Left ventricle myocardium inferior (tissue), 1 donor: ENCODE measurements at regions of chr9 and their contacts with region 1.

Region 1: DNA sequence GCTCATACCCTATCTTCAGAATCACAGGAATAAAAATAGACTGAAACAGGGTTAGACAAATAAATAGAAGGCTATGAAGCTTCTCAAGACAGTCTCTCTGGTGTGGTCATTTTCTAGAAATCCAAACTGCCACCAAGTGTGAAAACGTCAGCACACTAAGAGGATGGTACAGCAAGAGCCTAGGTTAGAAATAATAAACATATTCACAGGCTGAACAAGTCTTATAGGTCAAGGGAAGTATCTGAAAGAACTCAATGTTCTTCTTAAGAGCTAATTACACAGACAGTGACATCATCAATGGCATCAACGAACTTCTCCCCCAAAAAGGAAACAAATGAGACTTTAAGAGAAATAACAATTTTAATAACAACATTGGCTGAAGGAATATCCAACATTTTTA is 22.7 kb upstream of the PLPP6 start:
- DNase-seq: no peak
- H3K4me3 ChIP-seq: no peak overlapping the region
- H3K27ac ChIP-seq: no peak overlapping the region
- H3K4me1 ChIP-seq: no peaks in the 10 kb centered on the region
- H3K27me3 ChIP-seq: no peaks in the 10 kb centered on the region
- CTCF ChIP-seq: no peak

Region 2: GRCh38 chr9:4038182-4038723 is 601.2 kb before region 1 on chr9:
- intact Hi-C with region 1: no loop called
- DNase-seq: no peak
- H3K4me3 ChIP-seq: no peak overlapping the region
- H3K27ac ChIP-seq: no peak overlapping the region
- H3K4me1 ChIP-seq: no peaks in the 10 kb centered on the region
- H3K27me3 ChIP-seq: no peaks in the 10 kb centered on the region
- CTCF ChIP-seq: no peak

Region 3: DNA sequence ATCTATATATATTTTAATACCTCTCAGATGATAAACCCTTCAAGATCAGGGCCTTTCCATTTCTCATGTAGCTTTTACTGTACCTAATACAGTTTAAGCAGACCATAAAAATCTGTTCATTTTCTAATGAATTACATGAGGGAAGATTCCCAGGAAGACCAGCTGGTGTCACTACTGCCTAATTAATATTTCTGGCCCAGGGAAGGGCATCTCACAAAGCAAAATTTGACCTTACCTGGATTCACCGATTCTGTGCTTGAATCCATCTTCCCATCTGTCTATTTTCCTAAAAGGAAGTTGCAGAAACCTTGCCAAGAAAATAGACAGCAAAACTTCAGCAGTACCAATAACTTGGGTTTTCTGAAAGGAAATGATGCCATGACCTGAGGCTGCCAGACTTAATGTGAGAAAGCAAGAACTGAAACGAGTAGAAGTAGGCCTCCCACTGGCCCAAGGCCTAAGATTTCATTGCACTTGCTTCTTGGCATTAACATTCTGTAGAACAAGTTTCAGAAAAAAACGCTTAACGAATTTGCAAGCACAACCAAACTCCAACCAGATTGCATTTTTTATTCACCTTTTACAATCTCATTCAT is 256.6 kb before region 1 on chr9:
- intact Hi-C with region 1: loop called (anchors 2 kb)
- DNase-seq: no peak
- H3K4me3 ChIP-seq: no peak overlapping the region
- H3K27ac ChIP-seq: no peak overlapping the region
- H3K4me1 ChIP-seq: no peaks in the 10 kb centered on the region
- H3K27me3 ChIP-seq: peaks cover 6% of the 10 kb centered on the region
- CTCF ChIP-seq: peak; percentile 73

Region 4: DNA sequence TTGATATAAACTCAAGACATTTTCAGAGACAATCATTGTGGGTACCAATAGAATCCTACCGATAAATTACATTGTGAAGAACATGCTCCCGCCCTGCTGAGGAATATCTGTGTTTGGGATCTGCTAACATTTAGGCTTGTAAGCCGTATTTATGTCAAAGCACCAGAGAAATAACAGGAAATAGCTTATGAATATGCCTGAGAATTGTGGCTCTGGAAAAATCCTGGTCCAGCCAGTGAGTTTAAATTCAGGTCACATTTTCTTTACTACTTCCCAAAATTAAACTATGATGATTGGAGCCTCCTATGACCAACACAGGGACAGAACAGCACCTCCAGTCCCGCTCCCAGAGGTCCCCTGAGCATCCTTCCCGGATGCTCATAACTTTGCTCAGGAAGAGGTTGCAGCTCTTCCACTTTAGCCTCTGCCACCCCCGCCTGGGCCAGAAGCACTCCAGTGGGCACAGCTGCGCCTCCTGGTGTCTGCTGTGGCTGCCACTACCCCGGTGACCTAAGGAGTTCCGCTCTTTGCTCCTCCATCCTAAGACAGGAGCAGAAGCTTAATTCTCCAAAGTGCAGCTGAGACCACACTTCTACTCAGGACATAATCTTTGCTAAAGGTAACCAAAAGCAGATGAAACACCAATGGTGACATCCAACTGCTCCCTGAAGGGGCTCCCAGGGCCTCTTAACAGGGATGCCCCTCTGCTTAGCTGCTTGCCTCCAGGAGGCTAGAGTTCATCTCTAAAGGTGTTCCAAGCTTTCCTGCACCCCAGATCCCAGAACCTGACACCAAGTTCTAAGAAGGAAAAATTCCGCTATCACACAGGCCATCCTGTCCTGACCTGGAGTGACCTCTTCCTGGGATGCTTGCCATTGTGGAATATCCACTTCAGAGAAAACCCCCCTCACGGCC is 90.4 kb before region 1 on chr9:
- intact Hi-C with region 1: no loop called
- DNase-seq: peak; percentile 22
- H3K4me3 ChIP-seq: no peak overlapping the region
- H3K27ac ChIP-seq: peak overlapping the region; percentile 71
- H3K4me1 ChIP-seq: peaks cover 82% of the 10 kb centered on the region
- H3K27me3 ChIP-seq: no peaks in the 10 kb centered on the region
- CTCF ChIP-seq: peak; percentile 52

Region 5: DNA sequence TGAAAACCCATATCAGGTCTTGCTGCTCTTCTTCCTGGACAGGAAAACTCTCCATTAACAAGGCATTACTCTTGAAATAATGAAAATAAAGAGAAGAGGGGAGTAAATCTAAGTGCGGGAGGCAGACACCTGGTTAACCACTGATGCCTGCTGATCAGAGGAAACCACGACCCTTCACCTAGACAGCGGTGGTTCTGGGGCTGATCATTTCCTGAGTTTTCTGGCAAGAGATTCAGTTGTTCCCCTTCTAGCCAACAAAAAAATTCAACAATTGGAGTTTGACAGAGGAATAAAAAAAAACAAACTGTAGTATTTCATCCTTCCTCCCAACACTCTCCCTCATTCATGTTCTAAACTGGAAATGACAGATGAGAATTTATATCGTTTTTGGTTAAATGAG is 662.1 kb after region 1 on chr9:
- intact Hi-C with region 1: no loop called
- DNase-seq: no peak
- H3K4me3 ChIP-seq: no peak overlapping the region
- H3K27ac ChIP-seq: no peak overlapping the region
- H3K4me1 ChIP-seq: peaks cover 3% of the 10 kb centered on the region
- H3K27me3 ChIP-seq: no peaks in the 10 kb centered on the region
- CTCF ChIP-seq: no peak